B cell (primary cell): ENCODE measurements at regions of chr17 and their contacts with region 1.

Region 1: DNA sequence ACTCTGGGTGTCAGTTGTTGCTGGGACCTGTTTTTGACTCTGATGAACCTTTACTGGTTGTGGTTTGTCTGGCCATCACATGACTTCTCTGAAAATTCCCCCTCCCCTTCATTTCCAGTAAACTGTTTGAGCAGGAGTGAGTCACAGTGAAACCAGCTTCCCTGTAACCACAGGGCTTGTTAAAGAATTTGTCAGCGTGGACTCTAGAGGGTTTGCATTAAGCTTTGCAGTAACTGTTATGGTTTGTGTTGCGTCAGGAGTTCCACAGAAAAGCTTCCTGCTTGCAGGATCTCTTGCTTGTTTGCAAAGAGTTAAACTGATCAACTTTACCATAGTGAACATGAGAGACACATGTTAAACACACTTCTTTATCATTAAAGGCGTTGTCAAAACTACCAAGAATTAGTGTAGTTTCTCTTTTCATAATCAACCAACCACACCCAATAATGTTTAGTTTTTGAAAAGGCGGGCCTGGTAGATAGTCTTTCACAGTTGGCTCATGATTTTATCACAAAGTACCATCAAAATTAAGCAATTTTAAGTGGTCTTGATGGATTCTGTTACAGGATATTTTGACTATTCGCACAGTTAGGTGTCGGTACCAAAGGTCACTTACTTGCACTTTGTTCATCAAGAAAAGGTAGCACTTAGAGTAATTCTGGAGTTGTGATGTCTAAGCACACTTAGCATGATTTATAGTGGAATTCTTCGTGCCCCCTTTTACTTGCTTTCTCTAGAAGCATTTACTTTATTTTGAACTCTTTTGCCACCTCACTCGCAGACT is 79.3 kb downstream of the VMP1 start:
- DNase-seq: peak; percentile 92
- ATAC-seq: peak; percentile 90
- H3K4me3 ChIP-seq: peak overlapping the region; percentile 20 to 50 (median 41)
- H3K4me3 Mint-ChIP-seq: peak overlapping the region; percentile 88
- H3K27ac ChIP-seq: peak overlapping the region; percentile 68 to 89
- H3K27ac Mint-ChIP-seq: peak overlapping the region; percentile 99
- H3K4me1 ChIP-seq: peaks cover 33 to 45% of the 10 kb centered on the region in 2 donors
- H3K4me1 Mint-ChIP-seq: peaks cover 38% of the 10 kb centered on the region
- H3K27me3 ChIP-seq: no peaks in the 10 kb centered on the region
- H3K27me3 Mint-ChIP-seq: no peaks in the 10 kb centered on the region
- CTCF ChIP-seq: no peak

Region 2: DNA sequence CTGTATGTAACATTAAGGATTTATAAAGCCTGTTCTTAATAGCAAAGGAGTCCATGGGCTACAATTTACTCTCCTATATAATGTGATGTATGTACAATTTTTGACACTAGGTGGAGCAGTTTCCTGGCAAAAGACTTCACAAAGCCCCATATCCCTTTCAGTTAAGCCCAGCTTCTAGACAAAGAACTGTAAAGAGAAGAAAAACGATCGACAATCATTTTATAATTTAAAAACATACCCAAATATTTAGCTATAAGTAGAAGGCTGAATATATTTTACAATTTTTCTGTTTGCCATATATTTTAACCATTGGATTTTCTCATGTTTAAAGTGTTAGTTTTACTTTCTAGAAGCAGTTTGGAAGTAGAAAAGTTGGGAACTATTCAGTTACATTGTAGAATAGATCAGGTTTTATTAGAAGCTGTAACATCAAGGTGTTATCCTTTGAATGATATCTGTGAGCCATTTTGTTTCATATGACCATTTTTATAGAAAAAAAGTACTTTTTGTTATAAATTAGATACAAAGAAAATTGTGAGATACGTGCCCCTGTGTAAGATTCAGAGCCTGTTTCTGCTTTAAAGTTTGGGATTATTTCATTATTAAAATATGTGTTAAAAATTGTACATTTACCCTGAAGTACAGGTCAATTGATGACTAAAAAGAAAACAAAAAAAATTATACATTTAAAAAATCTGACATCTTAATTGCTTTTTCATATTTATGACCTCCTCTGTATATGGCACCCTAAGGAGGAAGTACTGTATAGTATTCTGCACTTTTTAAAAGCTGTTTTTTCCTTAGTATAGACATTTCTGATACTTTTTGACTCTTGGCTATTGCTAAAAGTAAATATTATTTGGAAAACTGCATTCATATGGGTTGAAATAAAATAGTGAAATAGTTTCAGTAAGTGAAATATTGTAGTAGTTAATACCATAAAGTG is 32.9 kb before region 1 on chr17:
- CTCF ChIA-PET with region 1: interaction called, 36 read pairs
- POLR2A ChIA-PET with region 1: no interaction called
- intact Hi-C with region 1: loop called (anchors 1 kb)
- DNase-seq: peak; percentile 85
- ATAC-seq: peak; percentile 97
- H3K4me3 ChIP-seq: no peak overlapping the region
- H3K4me3 Mint-ChIP-seq: peak overlapping the region; percentile 0
- H3K27ac ChIP-seq: no peak overlapping the region
- H3K27ac Mint-ChIP-seq: no peak overlapping the region
- H3K4me1 ChIP-seq: peaks cover 0 to 3% of the 10 kb centered on the region in 2 donors
- H3K4me1 Mint-ChIP-seq: peaks cover 7% of the 10 kb centered on the region
- H3K27me3 ChIP-seq: no peaks in the 10 kb centered on the region
- H3K27me3 Mint-ChIP-seq: no peaks in the 10 kb centered on the region
- CTCF ChIP-seq: peak; percentile 86

Region 3: DNA sequence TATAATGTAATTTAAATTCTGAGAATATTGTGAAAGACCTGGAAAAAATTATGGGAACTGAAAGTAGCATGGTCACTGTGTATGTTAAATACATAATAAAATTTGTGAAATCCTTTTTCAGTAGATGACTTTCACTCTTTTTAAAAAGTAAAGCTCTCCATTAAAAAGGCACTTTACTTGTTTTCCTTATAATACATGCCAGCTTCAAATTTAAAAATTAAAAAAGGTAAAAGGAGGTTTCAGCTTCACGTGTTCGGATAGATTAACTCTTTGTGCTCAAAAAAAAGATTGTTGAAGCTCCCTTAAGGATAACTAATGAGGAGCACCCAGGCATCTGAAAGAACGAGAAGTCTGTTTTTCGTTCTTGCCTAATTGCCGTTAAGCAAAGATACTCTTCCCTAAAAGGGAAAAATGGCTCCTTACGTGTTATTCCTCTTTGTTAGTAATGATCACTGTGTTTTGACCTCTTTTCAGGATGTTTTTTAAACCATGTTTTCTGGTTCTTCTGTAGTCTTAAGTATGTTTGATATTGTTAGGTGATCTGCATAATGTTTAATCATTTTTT is 18.3 kb after region 1 on chr17:
- CTCF ChIA-PET with region 1: no interaction called
- POLR2A ChIA-PET with region 1: interaction called, 4 read pairs
- intact Hi-C with region 1: loop called (anchors 2 kb)
- DNase-seq: no peak
- ATAC-seq: no peak
- H3K4me3 ChIP-seq: peak overlapping the region in 2 of 5 experiments; percentile 4 to 13
- H3K4me3 Mint-ChIP-seq: peak overlapping the region; percentile 43
- H3K27ac ChIP-seq: peak overlapping the region in 1 of 2 donors; percentile 7
- H3K27ac Mint-ChIP-seq: no peak overlapping the region
- H3K4me1 ChIP-seq: peaks cover 2 to 4% of the 10 kb centered on the region in 2 donors
- H3K4me1 Mint-ChIP-seq: peaks cover 4% of the 10 kb centered on the region
- H3K27me3 ChIP-seq: no peaks in the 10 kb centered on the region
- H3K27me3 Mint-ChIP-seq: no peaks in the 10 kb centered on the region
- CTCF ChIP-seq: no peak

Region 4: DNA sequence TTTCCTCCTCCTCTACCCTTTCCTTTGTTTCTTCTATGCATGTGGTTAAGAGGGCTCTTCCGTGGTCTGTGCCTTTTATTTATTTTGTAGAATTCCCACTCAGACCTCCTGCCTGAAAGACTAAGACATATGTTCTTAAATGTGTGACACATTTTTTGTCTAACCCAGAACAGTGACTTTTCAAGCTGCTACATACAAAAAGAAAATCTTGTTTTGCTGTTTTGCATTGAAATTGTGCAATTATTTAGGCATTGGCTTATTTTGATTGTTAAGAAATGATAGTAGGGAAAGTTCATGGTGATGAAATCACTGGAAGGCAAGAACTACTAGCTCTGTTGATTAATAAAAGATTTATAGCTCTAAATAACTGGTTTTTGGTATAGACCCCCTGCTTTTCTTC is 29.2 kb after region 1 on chr17:
- CTCF ChIA-PET with region 1: no interaction called
- POLR2A ChIA-PET with region 1: no interaction called
- intact Hi-C with region 1: no loop called
- DNase-seq: no peak
- ATAC-seq: no peak
- H3K4me3 ChIP-seq: no peak overlapping the region
- H3K4me3 Mint-ChIP-seq: no peak overlapping the region
- H3K27ac ChIP-seq: no peak overlapping the region
- H3K27ac Mint-ChIP-seq: no peak overlapping the region
- H3K4me1 ChIP-seq: no peaks in the 10 kb centered on the region
- H3K4me1 Mint-ChIP-seq: no peaks in the 10 kb centered on the region
- H3K27me3 ChIP-seq: no peaks in the 10 kb centered on the region
- H3K27me3 Mint-ChIP-seq: no peaks in the 10 kb centered on the region
- CTCF ChIP-seq: no peak

Region 5: GRCh38 chr17:59837308-59838051 is 50.8 kb after region 1 on chr17:
- CTCF ChIA-PET with region 1: interaction called, 29 read pairs
- POLR2A ChIA-PET with region 1: interaction called, 14 read pairs
- intact Hi-C with region 1: loop called (anchors 1 kb)
- DNase-seq: peak; percentile 88
- ATAC-seq: peak; percentile 90
- H3K4me3 ChIP-seq: peak overlapping the region; percentile 31 to 62 (median 50)
- H3K4me3 Mint-ChIP-seq: peak overlapping the region; percentile 92
- H3K27ac ChIP-seq: peak overlapping the region; percentile 85 to 90
- H3K27ac Mint-ChIP-seq: peak overlapping the region; percentile 97
- H3K4me1 ChIP-seq: peaks cover 33 to 45% of the 10 kb centered on the region in 2 donors
- H3K4me1 Mint-ChIP-seq: peaks cover 65% of the 10 kb centered on the region
- H3K27me3 ChIP-seq: no peaks in the 10 kb centered on the region
- H3K27me3 Mint-ChIP-seq: no peaks in the 10 kb centered on the region
- CTCF ChIP-seq: no peak

Region 6: DNA sequence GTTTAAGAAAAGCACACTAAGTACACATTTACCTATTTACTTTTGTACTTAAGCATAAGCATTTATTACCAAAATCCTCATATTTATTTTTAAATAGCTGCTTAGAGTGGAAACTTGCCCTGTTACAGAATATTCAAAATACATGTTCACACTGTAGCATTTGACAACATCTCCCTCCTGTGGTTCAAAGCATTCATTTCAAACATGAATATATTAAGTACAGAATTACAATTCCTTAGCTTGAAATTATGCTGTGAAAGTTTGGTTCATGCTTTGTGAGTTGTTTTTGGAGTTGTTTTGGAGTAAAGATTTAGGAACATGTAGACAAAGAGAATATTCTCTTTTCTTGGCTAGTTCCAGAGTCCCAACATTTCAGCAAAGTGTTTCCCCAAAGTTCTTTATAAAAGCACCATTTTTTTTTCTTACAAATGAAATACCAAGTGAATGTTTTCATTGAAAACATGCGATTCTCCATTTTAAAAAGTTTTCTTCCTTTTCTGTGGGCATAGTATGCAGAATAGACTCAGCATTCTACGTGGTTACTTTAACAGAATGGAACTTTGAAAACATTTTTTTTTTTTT is 72.8 kb after region 1 on chr17:
- CTCF ChIA-PET with region 1: interaction called, 21 read pairs
- POLR2A ChIA-PET with region 1: no interaction called
- intact Hi-C with region 1: loop called (anchors 2 kb)
- DNase-seq: peak; percentile 54
- ATAC-seq: peak; percentile 53
- H3K4me3 ChIP-seq: no peak overlapping the region
- H3K4me3 Mint-ChIP-seq: no peak overlapping the region
- H3K27ac ChIP-seq: no peak overlapping the region
- H3K27ac Mint-ChIP-seq: peak overlapping the region; percentile 37
- H3K4me1 ChIP-seq: no peaks in the 10 kb centered on the region
- H3K4me1 Mint-ChIP-seq: no peaks in the 10 kb centered on the region
- H3K27me3 ChIP-seq: no peaks in the 10 kb centered on the region
- H3K27me3 Mint-ChIP-seq: no peaks in the 10 kb centered on the region
- CTCF ChIP-seq: peak; percentile 77

Region 7: GRCh38 chr17:59950049-59950448 is 163.3 kb after region 1 on chr17:
- CTCF ChIA-PET with region 1: no interaction called
- POLR2A ChIA-PET with region 1: no interaction called
- intact Hi-C with region 1: no loop called
- DNase-seq: no peak
- ATAC-seq: no peak
- H3K4me3 ChIP-seq: no peak overlapping the region
- H3K4me3 Mint-ChIP-seq: no peak overlapping the region
- H3K27ac ChIP-seq: no peak overlapping the region
- H3K27ac Mint-ChIP-seq: no peak overlapping the region
- H3K4me1 ChIP-seq: no peaks in the 10 kb centered on the region
- H3K4me1 Mint-ChIP-seq: peaks cover 8% of the 10 kb centered on the region
- H3K27me3 ChIP-seq: no peaks in the 10 kb centered on the region
- H3K27me3 Mint-ChIP-seq: no peaks in the 10 kb centered on the region
- CTCF ChIP-seq: no peak

Region 8: DNA sequence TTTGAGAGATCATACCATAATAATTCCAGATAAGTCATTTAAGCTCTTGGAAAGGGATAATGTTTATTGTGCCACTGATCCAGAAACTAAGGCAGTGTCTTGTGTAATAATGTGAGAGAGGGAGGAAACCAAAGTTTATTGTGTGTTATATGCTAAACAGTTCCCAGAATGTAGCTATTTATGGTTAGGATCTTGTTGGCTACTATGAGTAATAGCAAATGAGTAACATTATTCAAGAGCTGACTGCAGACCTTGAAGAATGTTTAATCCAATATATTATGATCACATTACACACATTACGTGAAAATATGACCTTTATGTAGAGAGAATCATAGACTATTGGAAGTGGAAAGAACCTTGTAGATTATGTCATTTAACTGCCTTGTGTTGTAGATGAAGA is 1030.5 kb after region 1 on chr17:
- CTCF ChIA-PET with region 1: no interaction called
- POLR2A ChIA-PET with region 1: no interaction called
- intact Hi-C with region 1: no loop called
- DNase-seq: no peak
- ATAC-seq: no peak
- H3K4me3 ChIP-seq: no peak overlapping the region
- H3K4me3 Mint-ChIP-seq: no peak overlapping the region
- H3K27ac ChIP-seq: no peak overlapping the region
- H3K27ac Mint-ChIP-seq: no peak overlapping the region
- H3K4me1 ChIP-seq: no peaks in the 10 kb centered on the region
- H3K4me1 Mint-ChIP-seq: no peaks in the 10 kb centered on the region
- H3K27me3 ChIP-seq: no peaks in the 10 kb centered on the region
- H3K27me3 Mint-ChIP-seq: no peaks in the 10 kb centered on the region
- CTCF ChIP-seq: no peak